Activated CD4-positive, alpha-beta T cell treated with anti-CD3 and anti-CD28 coated beads for 36 hours (primary cell): ENCODE measurements at regions of chr15 and their contacts with region 1.

Region 1: GRCh38 chr15:41230650-41231533 is at the starts of genes CHP1 and EXD1:
- DNase-seq: peak; percentile 99
- ATAC-seq: peak; percentile 99
- H3K4me3 Mint-ChIP-seq: peak within 1 kb of the TSS; percentile 87
- H3K27ac Mint-ChIP-seq: peak within 1 kb of the TSS; percentile 86
- H3K4me1 Mint-ChIP-seq: peaks cover 29% of the 10 kb centered on the region
- H3K27me3 Mint-ChIP-seq: no peaks in the 10 kb centered on the region
- total RNA-seq, gene CHP1: 32.7 to 34.5 TPM
- total RNA-seq, gene EXD1: not detected

Region 2: DNA sequence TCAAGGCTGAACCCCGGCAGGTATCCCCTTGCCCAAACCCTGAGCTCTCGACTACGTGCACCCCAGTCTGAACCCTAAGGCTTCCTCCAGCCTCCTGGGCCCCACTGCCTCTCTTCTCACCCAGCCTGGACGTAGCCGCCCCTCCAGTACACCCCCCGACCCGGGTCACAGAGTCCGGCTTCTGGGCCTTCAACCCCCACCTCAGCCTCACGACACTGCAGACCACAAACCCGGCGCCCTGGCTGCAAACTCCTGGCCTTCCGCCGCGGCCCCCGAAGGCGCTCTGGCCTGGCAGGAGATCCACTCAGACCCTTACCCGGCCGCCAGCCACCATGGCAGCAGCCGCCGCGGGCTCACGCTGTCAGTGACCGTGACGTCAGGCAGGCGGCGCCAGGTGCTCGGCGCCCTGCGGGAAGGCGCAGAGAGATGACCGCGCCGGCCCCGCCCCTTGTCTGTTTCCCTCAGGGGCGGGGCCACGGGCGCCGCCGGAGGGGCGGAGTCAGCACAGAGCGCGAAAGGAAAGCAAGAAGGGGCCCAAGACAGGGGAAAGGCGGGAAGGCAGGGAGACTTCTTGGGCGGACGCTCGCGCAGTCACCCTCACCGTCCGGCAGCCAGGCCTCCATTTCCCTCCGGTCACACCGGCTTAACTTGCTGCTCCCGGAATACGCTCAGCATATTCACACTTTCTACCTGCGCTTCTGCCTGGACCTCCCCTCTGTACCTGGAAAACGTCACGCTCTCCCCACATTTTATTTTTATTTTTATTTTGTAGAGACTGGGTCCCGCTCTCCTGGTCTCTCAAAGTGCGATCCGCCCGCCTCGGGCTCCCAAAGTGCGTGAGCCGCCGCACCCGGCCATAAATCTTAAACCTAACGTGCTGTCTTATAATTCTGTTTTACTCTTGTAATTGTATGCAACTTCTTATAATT is 475.7 kb before region 1 on chr15 and contains the start of gene RMDN3:
- CTCF ChIA-PET with region 1: no interaction called
- POLR2A ChIA-PET with region 1: no interaction called
- intact Hi-C with region 1: loop called in 1 of 2 experiments (anchors 2 kb)
- DNase-seq: peak; percentile 97
- ATAC-seq: peak; percentile 92
- H3K4me3 Mint-ChIP-seq: peak within 1 kb of the TSS; percentile 91
- H3K27ac Mint-ChIP-seq: peak within 1 kb of the TSS; percentile 99
- H3K4me1 Mint-ChIP-seq: peaks cover 27% of the 10 kb centered on the region
- H3K27me3 Mint-ChIP-seq: no peaks in the 10 kb centered on the region
- total RNA-seq, gene RMDN3: 12.3 to 18.8 TPM

Region 3: DNA sequence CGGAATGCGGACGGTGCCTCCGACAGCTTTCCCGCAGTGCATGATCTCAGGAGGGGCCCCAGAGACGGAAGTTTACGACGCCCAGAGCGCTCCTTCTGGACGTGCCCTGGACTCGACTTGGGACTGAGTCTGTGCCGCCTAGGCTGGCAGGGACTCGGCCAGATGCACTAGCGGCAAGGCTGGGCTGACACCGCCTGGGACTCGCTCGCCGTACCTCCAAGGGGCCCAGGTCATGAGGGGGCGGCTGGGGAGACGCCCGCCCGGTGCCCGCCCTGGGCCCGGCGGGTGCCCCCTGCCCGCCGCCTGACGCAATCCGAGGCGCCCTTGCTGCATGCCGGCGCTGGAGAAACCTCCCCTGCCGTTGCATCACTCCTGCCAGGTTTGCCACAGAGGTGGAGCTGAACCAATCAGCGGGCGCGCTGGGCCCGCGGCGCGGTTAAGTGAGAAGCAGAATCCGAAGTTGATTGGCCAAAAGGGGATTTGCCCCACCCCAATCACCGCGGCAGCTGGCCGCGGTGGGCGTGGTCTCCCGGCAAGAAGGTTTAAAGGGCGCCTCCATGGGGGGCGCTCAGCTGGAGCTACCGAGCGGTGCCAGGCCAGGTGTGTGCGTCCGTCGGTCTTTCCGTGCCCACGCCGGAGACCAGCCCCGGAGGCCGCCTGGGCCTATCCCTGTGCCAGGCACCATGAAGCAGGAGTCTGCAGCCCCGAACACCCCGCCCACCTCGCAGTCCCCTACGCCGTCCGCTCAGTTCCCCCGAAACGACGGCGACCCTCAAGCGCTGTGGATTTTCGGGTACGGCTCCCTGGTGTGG is 277.8 kb before region 1 on chr15 and contains the start of gene CHAC1:
- CTCF ChIA-PET with region 1: interaction called, 4 read pairs
- POLR2A ChIA-PET with region 1: interaction called, 6 read pairs
- intact Hi-C with region 1: loop called (anchors 1 to 5 kb)
- DNase-seq: peak; percentile 99
- ATAC-seq: peak; percentile 92
- H3K4me3 Mint-ChIP-seq: peak within 1 kb of the TSS; percentile 93
- H3K27ac Mint-ChIP-seq: peak within 1 kb of the TSS; percentile 97
- H3K4me1 Mint-ChIP-seq: peaks cover 25% of the 10 kb centered on the region
- H3K27me3 Mint-ChIP-seq: peaks cover 2% of the 10 kb centered on the region
- total RNA-seq, gene CHAC1: 31.1 to 32.2 TPM

Region 4: DNA sequence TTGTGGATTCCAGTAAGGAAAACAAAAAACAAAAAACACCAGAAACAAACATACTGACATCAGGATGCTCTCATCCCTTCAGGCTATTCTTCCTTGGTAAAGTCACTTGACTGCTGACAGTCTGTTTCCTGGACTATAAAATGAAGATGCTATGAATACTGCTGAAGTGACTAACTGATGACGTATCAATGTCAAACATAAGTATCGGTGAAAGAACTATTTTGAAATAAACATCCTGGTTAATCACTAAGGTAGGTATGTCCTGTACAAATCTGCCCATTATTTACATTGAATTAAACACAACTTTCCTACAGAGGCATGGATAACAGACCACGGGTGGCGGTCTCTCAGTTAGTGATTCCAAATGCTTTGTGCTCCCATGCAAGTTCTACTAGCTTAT is 231.7 kb before region 1 on chr15:
- CTCF ChIA-PET with region 1: no interaction called
- POLR2A ChIA-PET with region 1: no interaction called
- intact Hi-C with region 1: no loop called
- DNase-seq: no peak
- ATAC-seq: no peak
- H3K4me3 Mint-ChIP-seq: no peak overlapping the region
- H3K27ac Mint-ChIP-seq: no peak overlapping the region
- H3K4me1 Mint-ChIP-seq: no peaks in the 10 kb centered on the region
- H3K27me3 Mint-ChIP-seq: no peaks in the 10 kb centered on the region

Region 5: GRCh38 chr15:41263891-41264351 is 33.0 kb after region 1 on chr15:
- CTCF ChIA-PET with region 1: no interaction called
- POLR2A ChIA-PET with region 1: no interaction called
- intact Hi-C with region 1: no loop called
- DNase-seq: no peak
- ATAC-seq: no peak
- H3K4me3 Mint-ChIP-seq: no peak overlapping the region
- H3K27ac Mint-ChIP-seq: no peak overlapping the region
- H3K4me1 Mint-ChIP-seq: no peaks in the 10 kb centered on the region
- H3K27me3 Mint-ChIP-seq: no peaks in the 10 kb centered on the region

Region 6: DNA sequence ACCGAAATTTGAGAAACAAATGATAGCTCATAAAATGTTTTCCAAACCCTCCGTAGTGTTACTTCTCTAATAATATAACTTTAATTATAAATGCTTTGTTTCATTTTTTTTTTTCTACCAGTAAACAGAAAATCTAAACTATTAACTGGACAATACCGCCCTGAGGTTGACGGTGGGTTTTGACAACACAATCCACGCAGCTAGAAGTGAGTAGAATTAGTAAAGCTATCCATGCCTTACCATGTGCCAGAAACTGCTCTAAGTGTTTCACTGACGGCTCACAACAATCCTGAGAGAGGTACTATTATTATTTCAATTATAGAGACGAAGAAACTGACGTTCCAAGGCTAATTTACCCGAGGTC is 171.0 kb after region 1 on chr15:
- CTCF ChIA-PET with region 1: interaction called, 3 read pairs
- POLR2A ChIA-PET with region 1: no interaction called
- intact Hi-C with region 1: loop called in 1 of 2 experiments (anchors 1 kb)
- DNase-seq: no peak
- ATAC-seq: no peak
- H3K4me3 Mint-ChIP-seq: peak overlapping the region; percentile 94
- H3K27ac Mint-ChIP-seq: peak overlapping the region; percentile 92
- H3K4me1 Mint-ChIP-seq: peaks cover 13% of the 10 kb centered on the region
- H3K27me3 Mint-ChIP-seq: no peaks in the 10 kb centered on the region

Region 7: DNA sequence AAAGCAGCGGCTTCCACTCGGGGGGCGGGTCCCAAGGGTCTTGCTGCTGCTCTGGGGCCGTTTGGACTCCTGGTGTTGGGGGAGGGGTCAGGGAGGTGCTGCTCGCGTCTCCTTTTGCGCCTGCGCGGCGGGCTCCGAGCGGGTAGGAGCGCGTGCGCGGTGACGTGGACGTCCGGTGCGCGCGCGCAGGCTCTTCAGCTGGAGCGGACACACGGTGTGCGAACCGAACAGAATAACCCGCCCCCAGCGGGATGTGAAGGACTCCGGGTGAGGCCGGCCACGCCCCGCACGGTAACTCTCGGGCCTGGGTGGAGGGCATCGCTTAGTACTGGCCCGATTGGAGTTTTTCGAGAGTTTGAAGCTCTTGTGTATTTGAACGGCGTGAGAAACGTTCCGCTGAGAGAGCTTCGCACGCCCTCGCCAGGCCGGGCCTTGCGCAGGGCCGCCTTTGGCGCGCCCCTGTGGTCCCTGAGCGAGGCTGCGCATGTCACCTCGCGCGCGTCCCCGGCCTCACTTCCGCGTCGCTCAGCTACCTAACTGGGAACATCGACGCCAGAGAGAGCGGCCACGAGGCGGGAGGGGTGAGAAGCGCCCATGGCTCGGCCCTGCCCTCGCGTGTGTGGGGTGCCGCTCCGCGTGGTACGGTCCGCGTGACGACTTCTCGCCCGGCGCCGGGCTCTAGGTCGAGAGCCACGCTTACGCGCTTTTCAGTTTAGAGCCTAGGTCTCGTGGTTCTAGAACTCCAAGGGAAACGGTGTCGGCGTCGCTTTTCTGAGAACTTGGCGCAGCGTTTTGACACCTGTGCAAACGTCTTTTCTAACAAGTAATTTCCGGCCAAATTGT is 429.6 kb after region 1 on chr15 and contains the start of gene MGA:
- CTCF ChIA-PET with region 1: no interaction called
- POLR2A ChIA-PET with region 1: interaction called, 3 read pairs
- intact Hi-C with region 1: loop called in 1 of 2 experiments (anchors 1 kb)
- DNase-seq: peak; percentile 94
- ATAC-seq: peak; percentile 89
- H3K4me3 Mint-ChIP-seq: peak within 1 kb of the TSS; percentile 92
- H3K27ac Mint-ChIP-seq: peak within 1 kb of the TSS; percentile 95
- H3K4me1 Mint-ChIP-seq: peaks cover 42% of the 10 kb centered on the region
- H3K27me3 Mint-ChIP-seq: peaks cover 7% of the 10 kb centered on the region
- total RNA-seq, gene MGA: 33.7 to 39.3 TPM

Region 8: DNA sequence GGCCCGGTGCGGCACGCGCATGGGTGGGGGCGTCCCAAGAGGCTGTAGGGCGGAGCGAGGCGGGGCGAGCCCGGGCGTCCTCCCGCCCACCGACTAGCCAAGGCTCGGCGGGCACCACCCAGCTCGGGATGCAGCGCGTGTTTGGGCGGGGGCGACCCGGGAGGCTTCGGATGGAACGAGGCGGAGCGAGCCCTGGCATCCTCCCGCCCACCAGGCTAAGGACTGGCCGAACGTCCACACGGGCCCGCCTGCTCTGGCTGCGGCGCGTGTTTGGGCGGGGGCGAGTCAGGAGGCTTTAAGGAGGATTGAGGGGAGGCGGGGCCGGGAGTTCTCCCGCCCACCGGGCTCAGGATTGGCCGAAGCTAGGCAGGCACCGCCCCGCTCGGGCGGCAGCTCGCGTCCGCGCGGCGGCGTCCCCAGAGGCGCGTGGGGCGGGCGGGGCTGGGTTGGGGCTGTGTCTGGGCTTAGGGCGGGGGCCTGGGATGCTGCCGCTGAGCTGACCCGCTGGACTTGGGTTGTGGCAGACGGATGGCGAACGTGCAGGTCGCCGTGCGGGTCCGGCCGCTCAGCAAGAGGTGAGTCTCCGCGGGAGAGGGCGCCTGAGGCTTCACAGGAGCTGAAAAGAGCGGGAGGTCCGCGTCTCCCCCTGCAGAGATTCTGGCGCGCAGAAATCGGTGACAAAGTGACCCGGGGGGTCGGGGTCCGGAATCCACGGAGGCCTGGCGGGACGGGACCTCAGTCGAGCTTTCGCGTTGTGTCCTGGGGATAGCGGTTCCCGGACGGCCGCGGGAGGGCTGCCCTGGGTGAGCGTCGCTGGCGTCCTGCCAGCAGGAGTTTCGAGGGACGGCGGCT is 1344.5 kb after region 1 on chr15 and contains the start of gene STARD9:
- CTCF ChIA-PET with region 1: no interaction called
- POLR2A ChIA-PET with region 1: no interaction called
- intact Hi-C with region 1: loop called in 1 of 2 experiments (anchors 5 kb)
- DNase-seq: peak; percentile 97
- ATAC-seq: peak; percentile 92
- H3K4me3 Mint-ChIP-seq: peak within 1 kb of the TSS; percentile 86
- H3K27ac Mint-ChIP-seq: peak within 1 kb of the TSS; percentile 76
- H3K4me1 Mint-ChIP-seq: peaks cover 18% of the 10 kb centered on the region
- H3K27me3 Mint-ChIP-seq: peaks cover 21% of the 10 kb centered on the region
- total RNA-seq, gene STARD9: 4.0 to 4.1 TPM